ENCODE measurements at regions of chrX and their contacts with region 1.

Region 1: GRCh38 chrX:84729809-84730208 is 227.6 kb upstream of the HDX start:
- DNase-seq: no peak
- ATAC-seq: peak; percentile 79

Region 2: DNA sequence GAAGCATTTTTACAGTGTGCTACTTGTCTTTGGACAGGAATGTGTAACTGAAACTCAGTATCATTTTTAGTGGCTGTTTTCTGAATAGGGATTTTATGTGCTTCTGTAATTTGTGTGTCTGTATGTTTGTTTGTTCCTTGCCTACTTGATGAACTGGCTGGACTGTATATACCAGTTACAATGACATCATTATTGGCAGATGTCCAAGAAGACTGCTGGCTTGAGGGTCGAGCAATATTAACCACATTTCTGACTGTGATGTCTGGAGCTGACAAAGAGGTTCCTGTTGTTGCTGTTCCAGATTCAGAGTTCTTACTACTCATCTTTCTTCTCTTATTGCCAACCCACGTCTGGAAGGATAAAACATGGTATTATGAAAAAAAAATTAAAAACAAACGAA is 260.6 kb before region 1 on chrX:
- intact Hi-C with region 1: no loop called
- DNase-seq: no peak
- ATAC-seq: no peak

Region 3: DNA sequence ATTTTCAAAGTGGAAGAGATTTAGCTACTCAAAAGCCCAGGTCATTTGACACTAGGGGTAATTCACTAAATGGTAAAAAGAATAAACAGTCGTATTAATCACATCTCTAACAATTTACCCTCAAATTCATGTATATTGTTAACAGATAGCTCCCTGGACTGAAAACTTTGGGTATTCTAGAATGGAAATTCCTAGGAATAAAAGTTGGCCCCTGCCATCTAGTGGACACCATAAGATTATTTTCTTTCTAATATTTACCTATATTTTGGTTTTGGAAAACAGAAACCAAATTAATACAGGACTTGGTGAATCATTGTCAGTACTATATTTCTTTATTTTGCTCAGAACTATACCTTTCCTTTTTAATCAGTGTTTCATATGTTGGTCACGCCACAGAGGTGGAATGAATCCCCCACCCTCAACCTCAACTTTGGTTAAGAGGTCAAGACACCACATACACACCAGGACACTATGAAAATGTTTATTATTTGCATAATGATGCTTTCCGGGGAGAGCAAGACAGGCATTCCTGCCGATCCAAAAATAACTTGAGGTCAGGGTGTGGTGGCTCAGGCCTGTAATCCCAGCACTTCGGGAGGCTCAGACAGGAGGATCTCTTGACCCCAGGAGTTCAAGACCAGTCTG is 177.6 kb after region 1 on chrX:
- intact Hi-C with region 1: loop called (anchors 5 kb)
- DNase-seq: no peak
- ATAC-seq: no peak

Region 4: GRCh38 chrX:85052636-85053343 is 323.0 kb after region 1 on chrX:
- intact Hi-C with region 1: loop called (anchors 2 kb)
- DNase-seq: no peak
- ATAC-seq: no peak